Activated CD4-positive, alpha-beta memory T cell treated with anti-CD3 and anti-CD28 coated beads for 36 hours (primary cell): ENCODE measurements at regions of chr22 and their contacts with region 1.

Region 1: DNA sequence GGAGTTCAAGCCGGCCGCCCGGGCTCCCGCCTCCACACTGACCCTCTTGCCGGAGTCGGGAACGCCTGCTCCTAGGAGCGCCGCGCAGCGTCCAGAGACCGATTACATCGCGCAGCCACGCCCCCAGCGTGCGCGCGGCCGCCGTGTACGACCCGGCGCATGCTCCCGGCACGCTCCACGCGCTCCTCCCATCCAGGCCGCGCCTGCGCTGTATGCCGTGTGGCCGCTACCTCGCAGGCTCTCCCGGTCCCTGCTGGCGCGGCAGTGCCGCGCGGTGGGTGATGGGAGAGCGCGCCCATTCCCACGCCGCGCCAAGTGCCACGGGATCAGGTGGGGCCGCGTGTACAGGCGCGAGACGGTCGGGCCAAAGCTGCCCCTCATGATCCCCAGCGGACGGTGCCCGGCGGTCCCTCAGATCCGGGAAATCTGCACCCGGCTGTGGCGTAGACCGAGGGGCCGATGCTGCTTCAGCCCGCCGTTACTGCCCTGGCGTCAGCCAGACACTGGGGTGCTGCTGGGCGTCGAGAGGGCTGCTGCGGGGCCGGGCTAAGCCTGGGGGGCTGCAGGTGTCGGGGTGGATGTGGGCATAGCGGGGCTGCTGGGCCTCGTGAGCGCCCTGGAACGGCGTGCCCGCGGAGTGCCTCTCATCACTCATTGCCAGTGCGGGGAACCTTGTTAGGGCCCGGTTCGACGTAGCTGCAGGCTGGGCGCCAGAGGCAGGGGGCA is at the starts of genes GNB1L and RTL10:
- DNase-seq: peak; percentile 97
- H3K4me3 Mint-ChIP-seq: peak within 1 kb of the TSS; percentile 94
- H3K27ac Mint-ChIP-seq: peak within 1 kb of the TSS; percentile 98
- H3K4me1 Mint-ChIP-seq: peaks cover 42% of the 10 kb centered on the region
- H3K27me3 Mint-ChIP-seq: no peaks in the 10 kb centered on the region
- total RNA-seq, gene GNB1L: 11.3 to 12.3 TPM
- total RNA-seq, gene RTL10: 11.5 to 13.5 TPM

Region 2: DNA sequence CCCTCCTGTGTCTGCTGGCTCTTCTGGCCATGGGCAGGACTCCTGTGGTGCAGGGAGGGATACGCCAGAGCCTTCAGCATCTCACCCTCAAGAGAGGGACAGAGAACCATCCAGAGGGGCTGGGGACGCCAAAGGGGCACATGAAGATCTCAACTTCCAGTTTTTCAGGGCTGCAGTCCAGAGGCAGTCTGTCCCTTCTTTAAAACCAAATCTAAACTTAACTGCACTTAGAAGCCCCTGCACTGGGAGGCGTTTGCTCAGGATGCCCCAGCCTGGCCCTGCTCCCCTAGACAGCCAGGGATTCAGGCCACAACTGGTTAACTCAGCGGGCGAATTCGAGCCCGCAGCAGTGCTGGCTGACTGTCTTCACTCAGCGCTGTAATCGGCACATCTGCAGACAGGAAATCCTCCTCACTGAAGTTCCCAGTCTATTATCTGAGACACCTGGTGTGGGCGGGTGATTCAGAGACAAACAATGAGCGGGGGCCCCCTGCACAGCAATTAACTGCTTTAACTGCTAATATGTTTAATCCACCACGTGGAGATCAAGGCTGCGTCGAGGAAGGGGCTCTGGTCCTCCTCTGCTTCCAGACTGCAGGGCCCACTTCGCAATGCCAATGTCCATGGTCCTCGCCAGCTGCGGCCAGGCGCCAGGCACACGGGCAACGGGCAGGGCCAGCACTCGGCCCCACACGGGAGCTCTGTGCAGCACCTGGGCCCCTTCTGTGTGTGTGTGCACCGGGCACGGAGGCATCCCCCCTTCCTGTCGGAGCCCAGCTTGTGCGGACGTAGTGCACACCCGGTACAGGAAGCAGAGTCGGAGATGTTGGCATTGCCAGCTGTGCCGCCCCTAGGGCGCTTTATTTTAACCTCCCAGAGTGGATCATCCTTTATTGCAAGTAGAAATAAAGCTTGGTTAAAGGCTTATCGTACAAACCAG is 36.6 kb after region 1 on chr22:
- CTCF ChIA-PET with region 1: interaction called, 3 read pairs
- POLR2A ChIA-PET with region 1: interaction called, 42 read pairs
- intact Hi-C with region 1: loop called (anchors 1 kb)
- DNase-seq: peak; percentile 90
- H3K4me3 Mint-ChIP-seq: peak overlapping the region; percentile 69
- H3K27ac Mint-ChIP-seq: peak overlapping the region; percentile 95
- H3K4me1 Mint-ChIP-seq: peaks cover 56% of the 10 kb centered on the region
- H3K27me3 Mint-ChIP-seq: no peaks in the 10 kb centered on the region

Region 3: GRCh38 chr22:19930551-19931486 is 75.9 kb after region 1 on chr22:
- CTCF ChIA-PET with region 1: no interaction called
- POLR2A ChIA-PET with region 1: no interaction called
- intact Hi-C with region 1: no loop called
- DNase-seq: no peak
- H3K4me3 Mint-ChIP-seq: no peak overlapping the region
- H3K27ac Mint-ChIP-seq: no peak overlapping the region
- H3K4me1 Mint-ChIP-seq: no peaks in the 10 kb centered on the region
- H3K27me3 Mint-ChIP-seq: no peaks in the 10 kb centered on the region

Region 4: GRCh38 chr22:19941365-19942082 is 86.6 kb after region 1 on chr22 and contains the starts of genes COMT and TXNRD2:
- CTCF ChIA-PET with region 1: no interaction called
- POLR2A ChIA-PET with region 1: interaction called, 5 read pairs
- intact Hi-C with region 1: loop called (anchors 5 kb)
- DNase-seq: peak; percentile 80
- H3K4me3 Mint-ChIP-seq: peak within 1 kb of the TSS; percentile 96
- H3K27ac Mint-ChIP-seq: peak within 1 kb of the TSS; percentile 94
- H3K4me1 Mint-ChIP-seq: peaks cover 27% of the 10 kb centered on the region
- H3K27me3 Mint-ChIP-seq: no peaks in the 10 kb centered on the region
- total RNA-seq, gene COMT: 61.7 to 66.1 TPM
- total RNA-seq, gene TXNRD2: 23.3 to 23.4 TPM